ENCODE measurements at regions of chr5 and their contacts with region 1.

Region 1: GRCh38 chr5:392431-392988 is 50.5 kb upstream of the EXOC3 start:
- DNase-seq: peak; percentile 96
- H3K4me3 Mint-ChIP-seq: peak overlapping the region; percentile 81
- H3K27ac Mint-ChIP-seq: peak overlapping the region; percentile 98
- H3K4me1 Mint-ChIP-seq: peaks cover 40% of the 10 kb centered on the region
- H3K27me3 Mint-ChIP-seq: no peaks in the 10 kb centered on the region

Region 2: DNA sequence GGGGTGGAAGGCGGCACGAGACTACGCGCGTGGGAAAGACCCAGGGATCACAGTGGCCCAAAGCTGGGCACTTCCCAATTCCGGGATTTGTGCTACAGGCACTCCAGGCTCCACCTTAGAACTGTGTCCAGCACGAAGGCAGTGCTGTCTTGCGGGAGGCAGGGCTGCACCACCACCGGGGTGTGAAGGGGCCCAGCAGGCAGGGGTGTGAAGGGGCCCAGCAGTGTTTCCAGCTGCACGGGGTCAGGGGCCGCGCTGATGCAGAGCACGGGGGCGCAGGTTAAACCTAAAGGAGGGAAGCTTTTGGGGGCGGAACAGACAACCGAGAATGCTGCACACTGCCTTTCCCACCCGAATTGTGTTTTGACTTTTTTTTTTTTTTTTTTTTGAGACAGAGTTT is 122.2 kb before region 1 on chr5:
- intact Hi-C with region 1: loop called (anchors 5 kb)
- DNase-seq: no peak
- H3K4me3 Mint-ChIP-seq: peak overlapping the region; percentile 86
- H3K27ac Mint-ChIP-seq: peak overlapping the region; percentile 78
- H3K4me1 Mint-ChIP-seq: peaks cover 35% of the 10 kb centered on the region
- H3K27me3 Mint-ChIP-seq: no peaks in the 10 kb centered on the region

Region 3: DNA sequence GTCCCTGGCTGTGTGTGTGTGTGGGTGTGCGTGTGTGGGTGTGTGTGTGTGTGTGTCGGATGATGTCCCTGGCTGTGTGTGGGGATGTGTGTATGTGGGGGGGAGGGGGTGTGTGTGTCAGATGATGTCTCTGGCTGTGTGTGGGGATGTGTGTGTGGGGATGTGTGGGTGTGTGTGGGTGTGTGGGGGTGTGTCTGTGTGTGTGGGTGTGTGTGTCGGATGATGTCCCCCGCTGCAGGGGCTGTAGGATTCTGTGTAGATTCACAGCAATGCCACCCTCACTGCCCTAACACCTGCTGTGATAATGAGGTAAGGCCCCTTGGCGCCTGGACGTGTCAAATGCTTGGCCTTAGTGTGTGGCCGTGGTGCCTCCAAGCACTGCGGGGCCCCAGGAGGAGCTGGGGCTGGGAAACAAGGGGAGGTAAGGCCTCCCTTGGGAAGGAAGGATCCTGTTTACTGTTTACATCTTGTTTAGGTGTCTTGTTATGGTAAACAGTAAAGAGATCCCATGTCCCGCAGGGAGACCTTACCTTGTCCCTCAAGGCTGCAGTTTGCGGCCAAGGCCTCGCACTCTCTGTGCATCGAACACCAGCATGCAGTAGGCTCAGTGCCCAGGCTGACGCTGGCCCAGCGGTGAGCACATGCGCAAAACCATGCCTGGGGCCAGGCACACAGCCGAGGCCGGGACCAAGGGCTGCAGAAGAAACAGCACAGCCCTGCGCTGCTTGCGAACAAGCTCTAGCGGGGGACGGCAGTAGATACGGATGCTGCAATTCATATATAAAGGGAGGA is 46.9 kb before region 1 on chr5:
- intact Hi-C with region 1: loop called (anchors 1 kb)
- DNase-seq: peak; percentile 61
- H3K4me3 Mint-ChIP-seq: peak overlapping the region; percentile 70
- H3K27ac Mint-ChIP-seq: peak overlapping the region; percentile 81
- H3K4me1 Mint-ChIP-seq: peaks cover 38% of the 10 kb centered on the region
- H3K27me3 Mint-ChIP-seq: no peaks in the 10 kb centered on the region

Region 4: DNA sequence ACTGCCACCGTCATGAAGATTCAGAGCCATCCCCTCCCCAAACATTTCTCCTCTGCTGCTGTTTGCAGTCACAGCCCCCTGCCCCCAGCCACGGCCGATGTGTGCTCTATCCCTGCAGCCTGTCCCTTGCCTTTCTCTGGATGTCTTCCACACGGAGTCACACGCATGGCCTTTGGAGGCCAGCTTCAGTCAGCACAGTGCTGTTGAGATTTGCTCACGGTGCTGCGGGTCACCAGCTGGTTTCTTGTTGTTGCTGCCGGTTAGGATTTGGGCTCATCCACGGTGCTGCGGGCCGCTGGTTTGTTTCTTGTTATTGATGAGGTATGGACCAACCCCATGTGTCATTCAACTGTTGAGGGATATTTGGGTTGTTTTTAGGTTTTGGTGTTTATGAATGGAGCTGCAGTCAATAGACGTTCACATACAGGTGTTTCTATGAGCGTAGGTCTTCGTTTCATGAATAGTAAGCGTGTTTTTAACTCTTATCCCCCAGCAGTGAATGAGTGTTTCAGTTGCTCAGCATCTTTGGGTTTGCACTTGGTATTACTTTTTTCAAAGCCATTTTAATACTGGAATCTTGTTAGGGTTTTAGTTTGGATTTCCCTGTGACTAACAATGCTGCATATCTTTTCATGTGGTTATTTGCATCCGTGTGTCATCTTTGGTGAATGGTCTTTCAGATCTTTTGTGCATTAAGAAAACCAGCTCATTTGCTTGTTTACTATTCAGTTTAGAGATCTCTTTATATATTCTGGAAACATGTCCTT is 13.4 kb before region 1 on chr5:
- intact Hi-C with region 1: loop called (anchors 1 kb)
- DNase-seq: peak; percentile 69
- H3K4me3 Mint-ChIP-seq: peak overlapping the region; percentile 70
- H3K27ac Mint-ChIP-seq: peak overlapping the region; percentile 93
- H3K4me1 Mint-ChIP-seq: peaks cover 62% of the 10 kb centered on the region
- H3K27me3 Mint-ChIP-seq: no peaks in the 10 kb centered on the region

Measured in activated CD4-positive, alpha-beta T cell treated with anti-CD3 and anti-CD28 coated beads, Interleukin-2, amount 10 ng/mL, durations not matched to agents 24 days and 14 days (primary cell).